Motor neuron (in vitro differentiated cells): ENCODE measurements at regions of chr6 and their contacts with region 1.

Region 1: GRCh38 chr6:142112451-142113061 is 20.2 kb upstream of the GJE1 start:
- ATAC-seq: peak in 6 of 8 experiments; percentile 36 to 61 (median 45)
- H3K4me3 ChIP-seq: no peak overlapping the region
- H3K27ac ChIP-seq: no peak overlapping the region
- H3K4me1 ChIP-seq: peaks cover 0 to 7% of the 10 kb centered on the region in 2 donors

Region 2: DNA sequence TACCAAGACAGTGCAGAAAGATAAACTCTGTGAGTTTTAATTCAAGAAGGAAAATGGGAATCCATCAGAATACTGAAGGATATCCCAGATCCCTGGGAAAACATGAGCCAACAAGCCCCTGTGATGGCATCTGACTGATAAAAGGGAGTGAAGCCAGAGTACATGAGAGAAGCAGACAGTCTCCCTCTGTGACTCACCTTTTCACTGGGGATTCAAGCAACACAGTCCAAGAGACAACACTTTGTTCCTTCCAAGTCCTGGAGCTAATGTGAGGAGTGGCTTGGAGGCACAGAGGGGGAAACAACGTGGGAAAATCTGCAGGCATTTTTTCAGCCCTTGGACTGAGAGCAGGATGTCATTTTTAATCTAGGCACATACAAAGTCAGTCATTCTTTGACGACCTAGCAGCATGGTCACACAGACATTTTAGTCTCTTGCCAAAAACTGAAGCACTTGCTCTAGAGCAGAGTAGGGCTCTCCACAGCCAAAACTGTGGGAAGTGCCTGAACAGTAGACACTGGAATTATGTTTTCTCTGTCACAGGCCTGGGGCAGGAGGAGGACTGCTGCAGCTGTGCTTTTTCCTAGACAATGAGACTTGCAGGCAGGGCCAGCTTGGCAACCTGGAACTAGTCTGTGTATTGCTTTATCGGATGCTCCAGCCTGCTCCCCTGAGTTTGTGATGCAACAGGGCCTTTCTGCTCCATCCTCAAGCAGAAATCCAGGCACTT is 444.8 kb before region 1 on chr6:
- in situ Hi-C with region 1: loop called in 2 of 9 experiments (anchors 25 kb)
- ATAC-seq: peak in 3 of 8 experiments; percentile 45 to 72 (median 65)
- H3K4me3 ChIP-seq: no peak overlapping the region
- H3K27ac ChIP-seq: no peak overlapping the region
- H3K4me1 ChIP-seq: no peaks in the 10 kb centered on the region

Region 3: DNA sequence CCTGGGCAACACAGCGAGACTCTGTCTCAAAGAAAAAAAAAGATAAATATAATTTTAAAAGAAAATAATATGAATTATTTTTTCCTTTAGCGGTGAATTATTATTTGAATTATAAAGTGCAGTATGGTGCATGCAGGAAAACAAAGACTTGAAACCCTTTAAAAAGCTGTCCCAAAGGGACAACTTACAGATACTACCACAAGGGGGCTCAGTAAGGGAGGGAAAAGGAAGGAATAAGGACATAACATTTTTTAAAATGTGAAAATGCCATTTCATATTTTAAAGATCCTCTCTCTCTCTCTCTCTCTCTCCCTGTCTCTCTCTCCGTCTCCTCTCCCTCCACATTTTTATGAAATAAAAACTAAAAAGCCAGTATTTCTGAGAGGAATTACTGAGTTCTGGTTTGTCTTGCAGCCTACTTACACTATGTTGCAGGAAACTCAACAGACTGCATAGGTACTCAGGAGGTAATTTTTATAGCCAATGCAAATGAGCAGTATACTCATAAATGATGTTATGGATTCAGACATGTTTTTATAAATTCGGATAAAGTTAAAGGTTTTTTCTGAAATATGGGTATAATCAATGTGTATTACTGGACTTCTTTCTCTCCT is 434.9 kb before region 1 on chr6:
- in situ Hi-C with region 1: loop called in 3 of 9 experiments (anchors 25 kb)
- ATAC-seq: peak in 3 of 8 experiments; percentile 23 to 50 (median 31)
- H3K4me3 ChIP-seq: no peak overlapping the region
- H3K27ac ChIP-seq: no peak overlapping the region
- H3K4me1 ChIP-seq: no peaks in the 10 kb centered on the region

Region 4: DNA sequence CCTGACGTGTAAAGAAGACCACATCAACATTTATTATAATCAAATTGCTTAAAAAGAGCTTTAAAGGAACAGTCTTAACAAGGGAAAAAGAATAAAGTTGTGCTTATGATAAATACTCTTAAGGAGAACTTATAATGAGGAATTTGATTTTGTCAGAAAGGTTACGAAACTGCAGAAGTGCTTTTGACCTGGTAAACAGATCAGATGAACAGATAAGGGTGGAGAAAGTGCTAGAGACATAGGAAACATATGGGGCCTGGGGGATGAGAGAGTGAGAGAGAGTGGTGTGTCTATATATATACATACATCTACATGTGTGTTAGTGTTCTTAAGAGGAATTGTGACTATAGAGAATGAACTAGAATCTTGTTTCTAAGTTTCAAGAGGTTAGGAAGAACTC is 166.1 kb before region 1 on chr6:
- in situ Hi-C with region 1: no loop called
- ATAC-seq: no peak
- H3K4me3 ChIP-seq: no peak overlapping the region
- H3K27ac ChIP-seq: no peak overlapping the region
- H3K4me1 ChIP-seq: no peaks in the 10 kb centered on the region

Region 5: DNA sequence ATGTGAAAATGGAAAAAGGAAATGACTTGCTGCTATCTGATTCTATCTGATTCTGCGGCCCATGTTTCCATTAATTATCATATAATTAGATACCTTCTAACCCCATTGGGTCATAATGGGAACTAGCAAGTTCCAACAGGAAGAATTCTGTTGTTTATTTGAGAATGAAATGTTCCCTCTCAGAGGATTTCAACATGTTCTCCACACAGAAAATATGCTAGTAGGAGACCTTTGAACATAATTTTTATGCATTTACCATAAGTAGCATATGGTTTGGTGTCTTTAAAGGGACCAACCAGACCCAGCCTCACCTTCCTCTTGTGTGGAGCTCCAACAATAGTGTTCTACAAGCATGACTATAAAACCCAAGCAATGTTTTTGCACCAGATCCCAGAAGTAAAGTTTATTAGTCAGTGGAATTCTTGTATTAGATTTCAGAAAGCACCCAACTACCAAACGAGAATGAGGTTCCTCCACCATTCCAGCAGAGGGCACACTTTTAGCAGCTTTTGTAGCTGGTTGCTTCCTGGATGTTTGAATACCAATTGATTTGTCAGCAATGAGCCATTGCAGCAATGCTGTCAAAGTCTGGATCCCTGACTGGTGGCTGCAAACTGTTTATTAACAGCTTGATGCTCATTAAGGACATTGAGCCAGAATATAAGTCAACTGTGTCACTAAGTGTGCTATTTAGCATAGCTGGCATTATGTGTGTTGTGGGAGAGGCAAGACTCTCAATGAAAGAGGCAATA is 123.4 kb before region 1 on chr6:
- in situ Hi-C with region 1: loop called in 1 of 9 experiments (anchors 10 kb)
- ATAC-seq: peak in 6 of 8 experiments; percentile 29 to 83 (median 51)
- H3K4me3 ChIP-seq: no peak overlapping the region
- H3K27ac ChIP-seq: no peak overlapping the region
- H3K4me1 ChIP-seq: peaks cover 0 to 9% of the 10 kb centered on the region in 2 donors